ENCODE measurements at regions of chr6 and their contacts with region 1.

Region 1: GRCh38 chr6:159739341-159739740 is 12.0 kb downstream of the WTAP start:
- DNase-seq: no peak
- H3K4me3 Mint-ChIP-seq: no peak overlapping the region
- H3K27ac Mint-ChIP-seq: no peak overlapping the region
- H3K4me1 Mint-ChIP-seq: no peaks in the 10 kb centered on the region
- H3K27me3 Mint-ChIP-seq: no peaks in the 10 kb centered on the region
- CTCF ChIP-seq: no peak

Region 2: DNA sequence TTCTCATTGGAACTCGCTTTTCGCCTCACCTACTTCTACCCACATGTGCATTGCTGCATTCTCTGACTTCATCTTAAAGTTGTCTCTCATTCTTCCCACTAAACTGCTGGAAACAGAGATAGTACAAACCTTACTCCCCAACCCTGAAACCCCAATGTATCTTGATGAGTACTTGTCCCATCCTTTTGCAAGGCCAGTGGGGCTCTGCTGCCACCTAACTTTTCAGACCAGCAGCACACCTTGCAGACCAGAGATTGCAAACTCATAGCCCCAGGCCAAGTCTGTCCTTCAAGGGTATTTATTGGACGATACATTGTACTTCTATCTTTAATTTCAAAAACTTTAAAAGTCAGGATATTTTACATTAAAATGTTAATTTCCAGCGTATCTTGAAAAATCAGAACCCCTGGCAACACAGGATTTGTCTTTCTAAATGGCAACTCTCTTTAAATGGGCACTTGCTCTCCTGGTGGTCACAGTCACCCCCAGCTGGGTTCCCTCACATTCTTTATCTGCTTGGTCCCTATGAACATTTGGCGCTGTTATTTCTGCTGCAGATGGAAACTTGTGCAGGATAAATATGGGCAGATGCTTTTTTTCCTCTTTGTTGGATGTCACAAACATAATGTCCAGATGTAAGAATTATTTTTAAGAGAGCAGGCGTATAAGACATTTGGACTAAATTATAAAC is 130.2 kb before region 1 on chr6:
- CTCF ChIA-PET with region 1: no interaction called
- intact Hi-C with region 1: no loop called
- DNase-seq: peak; percentile 58
- H3K4me3 Mint-ChIP-seq: no peak overlapping the region
- H3K27ac Mint-ChIP-seq: no peak overlapping the region
- H3K4me1 Mint-ChIP-seq: no peaks in the 10 kb centered on the region
- H3K27me3 Mint-ChIP-seq: no peaks in the 10 kb centered on the region
- CTCF ChIP-seq: peak; percentile 67

Region 3: DNA sequence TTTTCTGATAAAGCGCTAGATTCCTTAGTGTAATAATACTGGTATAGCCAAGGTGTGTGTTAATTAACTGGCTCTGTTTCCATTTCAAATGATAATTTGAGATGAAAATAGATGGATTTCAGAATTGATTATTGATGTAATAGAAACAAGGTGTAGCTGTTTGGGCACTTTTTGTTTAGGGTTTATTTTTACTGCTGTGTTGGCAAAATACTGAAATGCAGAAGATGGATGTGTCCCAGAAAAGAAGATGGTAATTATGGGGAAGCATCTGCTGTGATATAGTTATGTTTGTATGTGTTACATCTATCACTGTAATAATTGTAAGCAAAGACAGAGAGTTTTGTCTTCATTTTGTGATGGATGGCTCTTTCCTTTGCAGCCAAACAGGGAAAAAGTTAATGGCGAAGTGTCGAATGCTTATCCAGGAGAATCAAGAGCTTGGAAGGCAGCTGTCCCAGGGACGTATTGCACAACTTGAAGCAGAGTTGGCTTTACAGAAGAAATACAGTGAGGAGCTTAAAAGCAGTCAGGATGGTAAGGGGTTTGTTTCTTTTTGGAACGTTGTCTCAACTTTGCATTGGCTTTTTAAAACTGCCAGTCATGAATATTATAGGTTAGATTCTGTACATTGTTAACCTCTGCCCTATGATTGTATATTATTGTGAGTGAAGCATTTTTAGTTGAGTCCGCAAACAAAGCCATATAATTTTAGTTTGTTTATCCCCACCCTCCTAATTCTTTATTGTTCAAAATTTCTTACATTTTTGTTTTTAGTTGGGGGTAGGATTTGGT is 13.9 kb after region 1 on chr6:
- CTCF ChIA-PET with region 1: no interaction called
- intact Hi-C with region 1: loop called (anchors 2 kb)
- DNase-seq: no peak
- H3K4me3 Mint-ChIP-seq: no peak overlapping the region
- H3K27ac Mint-ChIP-seq: no peak overlapping the region
- H3K4me1 Mint-ChIP-seq: peaks cover 3% of the 10 kb centered on the region
- H3K27me3 Mint-ChIP-seq: no peaks in the 10 kb centered on the region
- CTCF ChIP-seq: no peak

Measured in Calu3 (cell line).